Sciatic nerve (tissue), 2 donors: ENCODE measurements at regions of chr11 and their contacts with region 1.

Region 1: DNA sequence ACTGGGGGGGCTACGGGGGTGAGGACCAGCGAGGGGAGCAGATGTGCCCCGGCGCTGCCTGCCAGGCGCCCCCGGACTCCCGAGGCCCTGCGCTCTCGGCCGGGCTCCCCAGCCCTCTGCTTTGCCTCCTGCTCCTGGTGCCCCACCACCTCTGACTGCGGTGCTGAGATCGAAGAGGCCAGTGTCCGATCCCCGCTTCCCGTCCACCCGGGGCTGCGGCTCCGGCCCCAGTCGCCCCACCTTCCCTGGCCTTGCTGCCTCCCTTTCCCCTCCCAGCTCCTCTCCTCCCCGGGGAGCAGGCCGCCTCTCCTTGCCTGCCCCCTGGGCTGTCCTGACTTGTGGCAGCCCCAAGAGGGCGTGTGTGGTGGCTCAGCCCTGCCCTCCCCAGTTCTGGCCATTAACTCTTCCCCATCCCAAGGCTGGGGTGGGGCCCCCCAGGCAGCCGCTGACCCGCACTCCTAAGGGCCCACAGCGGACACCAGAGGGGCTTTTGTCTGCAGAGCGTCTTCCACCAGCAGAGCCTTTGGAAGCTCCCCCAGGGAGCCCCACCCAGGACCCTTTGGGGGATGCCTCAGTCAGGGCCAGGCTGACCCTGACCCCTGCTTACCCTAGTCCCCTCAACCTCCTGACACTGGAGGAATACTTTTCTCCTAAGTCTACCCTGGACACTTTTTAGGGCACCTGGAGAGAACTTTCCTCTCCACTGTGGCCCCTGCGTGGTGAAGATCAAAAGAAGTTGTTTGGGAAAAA is 16.6 kb downstream of the RTN4RL2 start:
- DNase-seq: no peak
- ATAC-seq: peak; percentile 55

Region 2: DNA sequence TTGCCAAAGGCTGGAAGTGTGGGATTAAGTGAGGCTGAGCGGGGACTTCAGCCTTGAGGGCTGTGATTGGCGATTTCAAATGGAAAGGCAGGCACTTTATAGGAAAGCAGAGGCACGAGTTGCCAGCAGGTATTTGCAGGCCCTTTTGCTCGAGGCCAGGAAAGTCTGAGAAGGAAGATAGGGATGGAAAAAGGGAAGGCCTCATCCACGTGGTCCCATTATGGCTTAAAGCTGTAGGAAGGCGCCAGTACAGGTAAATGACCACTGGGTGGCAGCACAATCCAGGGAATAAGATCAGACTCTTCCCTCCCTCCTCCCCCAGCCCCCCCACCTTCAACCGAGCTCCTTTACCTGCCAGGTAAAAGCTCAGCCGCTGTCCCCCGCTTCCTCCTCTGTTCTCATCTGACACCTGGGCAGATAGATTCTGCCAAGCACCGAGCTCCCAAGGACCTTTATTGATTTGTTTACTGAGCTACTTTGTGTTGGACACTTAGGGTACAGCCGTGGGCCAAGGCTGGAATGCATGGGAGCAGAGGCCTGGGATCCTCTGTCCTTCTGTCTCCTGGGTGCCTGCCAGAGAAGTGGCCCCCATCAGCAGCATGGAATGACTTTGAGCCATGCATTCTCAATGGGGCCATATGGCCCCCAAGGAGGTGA is 131.2 kb before region 1 on chr11:
- intact Hi-C with region 1: loop called (anchors 5 kb)
- DNase-seq: peak; percentile 83
- ATAC-seq: peak; percentile 71

Region 3: DNA sequence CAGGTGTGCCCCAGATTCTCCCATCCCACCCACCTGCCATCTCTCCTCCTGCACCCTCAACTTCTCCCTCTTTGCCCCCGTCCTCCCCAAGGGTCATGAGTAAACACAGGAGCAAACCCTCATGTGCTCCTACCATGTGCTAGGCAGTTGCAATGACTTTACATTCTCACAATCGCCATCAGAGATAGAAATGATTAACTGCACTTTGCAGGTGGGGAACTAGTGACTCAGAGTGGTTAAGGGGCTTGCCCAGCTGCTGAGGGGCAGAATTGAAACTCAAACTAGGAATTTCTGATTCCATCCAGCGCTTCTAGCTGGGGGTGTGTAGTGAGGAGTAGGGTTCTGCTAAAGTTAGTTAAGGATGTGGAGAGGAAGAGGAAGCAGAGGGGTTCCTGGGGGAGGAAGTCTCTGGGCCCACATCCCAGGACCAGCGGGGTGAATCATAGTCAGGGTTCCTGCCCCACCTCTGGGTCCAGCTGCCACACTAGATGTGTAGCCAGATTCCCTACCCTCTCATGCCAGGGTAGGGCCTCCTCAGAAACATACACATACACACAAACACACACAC is 70.5 kb before region 1 on chr11:
- intact Hi-C with region 1: no loop called
- DNase-seq: no peak
- ATAC-seq: peak; percentile 46

Region 4: GRCh38 chr11:57819252-57819979 is 342.5 kb after region 1 on chr11:
- intact Hi-C with region 1: no loop called
- DNase-seq: no peak
- ATAC-seq: no peak

Region 5: DNA sequence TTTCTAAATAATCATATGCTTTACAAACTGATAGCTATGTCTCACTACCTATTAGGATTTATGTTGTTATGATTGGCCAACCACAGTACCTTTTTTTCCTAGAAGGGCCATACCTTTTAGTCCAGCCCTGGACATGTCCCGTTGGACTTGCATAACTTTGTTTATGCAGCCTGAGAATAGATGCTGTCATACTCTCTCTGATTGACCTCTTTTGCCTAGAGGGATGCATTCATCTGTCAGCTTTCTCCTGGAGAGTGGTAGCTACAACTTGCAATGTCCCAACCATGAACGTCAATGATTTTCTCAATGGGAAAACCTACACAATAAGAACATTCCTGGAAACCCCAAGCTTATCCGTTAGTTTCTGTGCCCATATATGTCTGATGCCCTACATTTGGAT is 635.5 kb after region 1 on chr11:
- intact Hi-C with region 1: no loop called
- DNase-seq: no peak
- ATAC-seq: no peak